MCF 10A (cell line): ENCODE measurements at regions of chr1 and their contacts with region 1.

Region 1: GRCh38 chr1:64163970-64164369 is 39.5 kb upstream of the UBE2U start:
- DNase-seq: peak; percentile 30
- H3K4me3 Mint-ChIP-seq: no peak overlapping the region
- H3K27ac Mint-ChIP-seq: no peak overlapping the region
- H3K4me1 Mint-ChIP-seq: no peaks in the 10 kb centered on the region
- H3K27me3 Mint-ChIP-seq: no peaks in the 10 kb centered on the region
- CTCF ChIP-seq: peak; percentile 28

Region 2: DNA sequence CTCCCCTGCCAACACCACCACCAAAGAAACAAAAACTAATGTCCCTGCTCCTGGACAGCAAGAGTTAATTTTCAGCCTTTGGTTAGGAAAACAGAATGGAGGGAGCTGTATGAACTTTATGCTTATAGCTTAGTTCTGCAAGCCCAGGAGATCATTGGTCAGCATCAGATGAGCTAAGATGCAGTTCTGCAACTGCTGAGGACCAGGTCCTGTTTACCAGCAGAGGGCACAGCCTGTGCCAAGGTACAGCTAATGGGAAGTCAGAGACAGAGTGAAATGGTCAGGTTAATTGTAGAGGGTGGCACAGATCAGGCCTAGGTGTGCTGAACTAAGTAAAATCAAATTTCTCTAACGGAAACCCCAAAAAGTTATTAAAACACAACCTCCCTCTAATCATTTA is 228.8 kb before region 1 on chr1:
- CTCF ChIA-PET with region 1: interaction called, 11 read pairs
- POLR2A ChIA-PET with region 1: no interaction called
- intact Hi-C with region 1: loop called (anchors 1 kb)
- DNase-seq: peak; percentile 53
- H3K4me3 Mint-ChIP-seq: no peak overlapping the region
- H3K27ac Mint-ChIP-seq: no peak overlapping the region
- H3K4me1 Mint-ChIP-seq: peaks cover 6% of the 10 kb centered on the region
- H3K27me3 Mint-ChIP-seq: no peaks in the 10 kb centered on the region
- CTCF ChIP-seq: peak; percentile 36